GM12878 (cell line): ENCODE measurements at regions of chr5 and their contacts with region 1.

Region 1: DNA sequence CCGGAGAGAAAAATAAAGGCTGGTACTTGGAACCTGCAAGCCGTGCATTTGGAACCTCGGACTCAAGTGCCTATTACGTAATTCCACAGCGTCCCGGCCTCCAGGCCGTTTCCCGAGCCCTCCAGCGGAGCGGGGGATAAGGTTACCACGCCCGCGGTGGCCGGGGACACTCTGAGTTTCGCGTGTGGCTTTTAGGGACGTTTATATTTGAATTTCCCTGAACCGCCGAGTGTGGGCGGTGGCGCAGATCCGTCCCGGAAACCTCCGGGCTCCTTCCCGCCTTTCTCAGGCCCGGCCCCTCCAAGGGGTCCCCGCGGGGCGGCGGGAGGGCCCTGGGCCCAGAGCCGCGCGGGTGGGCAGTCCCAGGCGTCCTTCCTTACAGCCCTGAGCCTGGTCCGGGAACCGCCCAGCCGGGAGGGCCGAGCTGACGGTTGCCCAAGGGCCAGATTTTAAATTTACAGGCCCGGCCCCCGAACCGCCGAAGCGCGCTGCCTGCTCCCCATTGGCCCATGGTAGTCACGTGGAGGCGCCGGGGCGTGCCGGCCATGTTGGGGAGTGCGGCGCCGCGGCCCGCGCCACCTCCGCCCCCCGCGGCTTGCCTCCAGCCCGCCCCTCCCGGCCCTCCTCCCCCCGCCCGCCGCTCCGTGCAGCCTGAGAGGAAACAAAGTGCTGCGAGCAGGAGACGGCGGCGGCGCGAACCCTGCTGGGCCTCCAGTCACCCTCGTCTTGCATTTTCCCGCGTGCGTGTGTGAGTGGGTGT is at the start of gene LMNB1:
- DNase-seq: peak; percentile 83
- ATAC-seq: peak; percentile 80
- H3K4me3 ChIP-seq: peak within 1 kb of the TSS; percentile 96
- H3K27ac ChIP-seq: peak within 1 kb of the TSS; percentile 96
- H3K4me1 ChIP-seq: no peaks in the 10 kb centered on the region
- H3K27me3 ChIP-seq: no peaks in the 10 kb centered on the region
- CTCF ChIP-seq: no peak
- EP300 ChIP-seq: 0 out of 4 replicates have a peak, but pooled peaks have one; percentile 16 to 55
- POLR2A ChIP-seq: peak; percentile 70
- RAD21 ChIP-seq: 0 out of 2 replicates have a peak, but pooled peaks have one; percentile 18
- polyA plus RNA-seq, gene LMNB1: 7.0 to 7.1 TPM

Region 2: DNA sequence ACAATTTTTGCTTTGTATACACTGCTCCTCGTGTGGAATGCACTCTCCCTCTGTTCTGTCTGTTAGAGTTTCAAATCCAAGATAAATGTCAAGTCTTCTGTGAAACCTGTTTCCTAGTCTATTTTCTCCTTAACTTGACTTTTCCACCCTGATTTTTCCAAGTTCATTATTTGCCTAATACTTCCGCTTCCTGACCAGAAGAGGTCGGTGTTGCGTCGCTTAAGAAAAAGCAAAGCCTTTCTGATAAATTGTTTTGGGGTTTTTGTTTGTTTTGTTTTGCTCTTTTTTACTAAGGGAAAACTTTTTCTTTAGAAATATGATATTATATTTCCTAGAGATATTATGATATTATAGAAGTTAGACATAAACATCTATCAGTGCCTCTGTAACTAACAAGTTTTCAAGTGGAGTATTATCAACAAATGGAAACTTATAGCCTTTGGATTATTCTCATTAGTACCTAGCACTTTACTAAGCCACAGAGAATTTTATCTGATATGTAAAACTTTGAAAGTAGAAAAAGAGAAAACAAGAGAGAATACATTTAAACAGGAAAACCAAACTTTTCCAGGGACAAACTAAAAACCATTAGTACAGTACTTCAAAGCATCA is 120.2 kb before region 1 on chr5:
- CTCF ChIA-PET with region 1: interaction called, 46 read pairs
- POLR2A ChIA-PET with region 1: interaction called, 5 read pairs
- RAD21 ChIA-PET with region 1: interaction called, 14 read pairs
- SMC1A ChIA-PET with region 1: interaction called, 37 read pairs
- in situ Hi-C with region 1: no loop called
- intact Hi-C with region 1: no loop called
- DNase-seq: no peak
- ATAC-seq: peak; percentile 22; the same call in 1 of the 3 replicates
- H3K4me3 ChIP-seq: no peak overlapping the region
- H3K27ac ChIP-seq: no peak overlapping the region
- H3K4me1 ChIP-seq: no peaks in the 10 kb centered on the region
- H3K27me3 ChIP-seq: no peaks in the 10 kb centered on the region
- CTCF ChIP-seq: peak; percentile 75 to 88 (median 86)
- EP300 ChIP-seq: no peak
- POLR2A ChIP-seq: no peak
- RAD21 ChIP-seq: peak; percentile 98

Region 3: DNA sequence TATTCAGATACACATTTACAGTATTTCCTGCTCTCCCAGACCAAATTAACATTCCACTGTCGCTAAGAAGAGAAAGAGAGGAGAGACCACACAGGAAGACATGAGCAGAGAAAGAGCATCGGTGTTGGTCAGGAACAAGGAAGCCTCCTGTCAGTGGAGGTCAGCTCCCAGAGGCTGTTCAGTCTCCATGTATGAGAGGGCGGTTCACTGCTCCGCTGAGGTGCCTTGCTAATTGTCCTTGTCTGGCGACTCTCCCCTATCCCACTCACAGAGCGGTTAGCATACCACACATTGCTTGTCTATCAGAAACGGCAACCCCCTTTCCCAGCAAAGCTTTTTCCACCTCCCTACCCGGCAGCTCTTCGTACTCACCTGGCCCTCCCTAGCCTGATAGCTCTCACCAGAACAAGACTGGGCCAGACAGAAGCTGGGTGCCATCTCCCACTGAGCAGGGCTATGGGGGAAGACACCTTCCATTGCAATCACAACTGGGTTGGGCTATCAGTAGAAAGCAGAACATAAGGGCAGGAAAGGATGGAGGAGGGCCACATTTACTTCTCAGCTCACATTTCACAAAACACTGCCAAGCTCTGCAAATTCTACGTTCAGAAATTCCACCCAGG is 58.3 kb before region 1 on chr5:
- CTCF ChIA-PET with region 1: interaction called, 4 read pairs
- POLR2A ChIA-PET with region 1: no interaction called
- RAD21 ChIA-PET with region 1: interaction called, 5 read pairs
- SMC1A ChIA-PET with region 1: interaction called, 13 read pairs
- in situ Hi-C with region 1: no loop called
- intact Hi-C with region 1: loop called (anchors 2 kb)
- DNase-seq: no peak
- ATAC-seq: no peak; the same call in 2 of the 3 replicates
- H3K4me3 ChIP-seq: no peak overlapping the region
- H3K27ac ChIP-seq: no peak overlapping the region
- H3K4me1 ChIP-seq: no peaks in the 10 kb centered on the region
- H3K27me3 ChIP-seq: no peaks in the 10 kb centered on the region
- CTCF ChIP-seq: no peak
- EP300 ChIP-seq: no peak
- POLR2A ChIP-seq: no peak
- RAD21 ChIP-seq: no peak

Region 4: DNA sequence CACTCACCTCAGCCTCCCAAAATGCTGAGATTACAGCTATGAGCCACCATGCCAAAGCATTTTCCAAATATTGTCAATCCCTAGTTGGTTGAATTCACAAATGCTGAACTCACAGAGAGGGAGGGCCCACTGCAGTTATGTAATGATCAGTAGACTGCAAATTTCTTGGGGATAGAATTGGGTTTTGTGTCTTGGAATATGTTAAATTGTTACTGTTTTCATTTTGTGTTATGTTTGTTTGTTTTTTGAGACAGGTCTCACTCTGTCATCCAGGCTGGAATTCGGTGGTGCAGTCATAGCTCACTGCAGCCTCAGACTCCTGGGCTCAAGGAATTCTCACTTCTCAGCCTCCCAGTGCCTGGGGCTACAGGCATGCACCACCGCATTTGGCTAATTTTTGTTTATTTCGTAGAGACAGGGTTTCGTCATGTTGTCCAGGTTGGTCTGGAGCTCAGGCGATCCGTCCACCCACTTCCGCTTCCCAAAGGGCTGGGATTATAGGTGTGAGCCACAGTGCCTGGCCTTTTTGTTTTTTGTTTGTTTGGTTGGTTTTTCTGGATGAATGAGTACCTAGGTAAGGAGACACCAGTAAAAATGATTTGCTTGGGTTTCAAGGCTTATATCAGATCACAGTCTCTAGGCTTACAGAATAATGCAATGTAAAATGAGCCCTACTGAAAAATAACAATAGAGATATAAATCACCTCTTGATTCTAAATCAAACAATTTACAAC is 31.3 kb before region 1 on chr5:
- CTCF ChIA-PET with region 1: interaction called, 9 read pairs
- POLR2A ChIA-PET with region 1: interaction called, 9 read pairs
- RAD21 ChIA-PET with region 1: interaction called, 13 read pairs
- SMC1A ChIA-PET with region 1: interaction called, 17 read pairs
- in situ Hi-C with region 1: no loop called
- intact Hi-C with region 1: loop called (anchors 1 kb)
- DNase-seq: no peak
- ATAC-seq: no peak
- H3K4me3 ChIP-seq: no peak overlapping the region
- H3K27ac ChIP-seq: no peak overlapping the region
- H3K4me1 ChIP-seq: peaks cover 16% of the 10 kb centered on the region
- H3K27me3 ChIP-seq: no peaks in the 10 kb centered on the region
- CTCF ChIP-seq: no peak
- EP300 ChIP-seq: no peak
- POLR2A ChIP-seq: no peak
- RAD21 ChIP-seq: no peak

Region 5: DNA sequence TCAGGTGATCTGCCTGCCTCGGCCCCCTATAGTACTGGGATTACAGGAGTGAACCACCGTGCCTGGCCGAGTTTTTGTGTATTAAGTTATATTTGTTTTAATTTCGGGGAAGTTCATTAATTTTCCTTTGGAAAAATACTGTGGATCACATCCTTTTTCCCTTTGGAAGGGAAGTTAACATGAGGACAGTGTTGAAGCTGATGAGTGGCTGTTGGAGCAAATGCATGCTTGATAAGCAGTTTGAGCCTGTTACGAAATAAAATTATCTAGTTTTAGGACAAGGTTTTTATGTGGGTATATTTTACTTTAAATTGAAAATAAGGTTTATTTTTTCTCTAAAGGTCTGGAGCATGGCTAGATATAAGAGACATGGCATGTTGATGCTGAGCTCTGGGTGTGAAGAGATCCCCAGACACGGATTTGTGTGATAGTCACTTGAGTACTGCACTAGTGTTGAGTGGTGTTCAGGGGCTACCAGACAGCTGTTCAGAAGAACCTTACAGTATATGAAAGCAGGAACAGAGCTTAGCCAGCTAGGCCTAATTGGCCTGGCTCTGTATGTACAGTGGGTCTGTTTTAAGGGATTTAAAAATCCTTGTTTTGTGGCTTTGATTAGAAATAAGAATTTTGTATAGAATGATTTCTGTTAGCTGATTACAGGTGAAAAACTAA is 17.6 kb after region 1 on chr5:
- CTCF ChIA-PET with region 1: interaction called, 75 read pairs
- POLR2A ChIA-PET with region 1: interaction called, 31 read pairs
- RAD21 ChIA-PET with region 1: interaction called, 55 read pairs
- SMC1A ChIA-PET with region 1: interaction called, 58 read pairs
- in situ Hi-C with region 1: no loop called
- intact Hi-C with region 1: no loop called
- DNase-seq: no peak
- ATAC-seq: peak; percentile 47
- H3K4me3 ChIP-seq: no peak overlapping the region
- H3K27ac ChIP-seq: peak overlapping the region; percentile 2; the same call in 1 of the 2 replicates
- H3K4me1 ChIP-seq: peaks cover 23% of the 10 kb centered on the region
- H3K27me3 ChIP-seq: no peaks in the 10 kb centered on the region
- CTCF ChIP-seq: no peak
- EP300 ChIP-seq: no peak
- POLR2A ChIP-seq: no peak
- RAD21 ChIP-seq: no peak

Region 6: GRCh38 chr5:127011961-127012644 is 235.4 kb after region 1 on chr5:
- CTCF ChIA-PET with region 1: no interaction called
- POLR2A ChIA-PET with region 1: interaction called, 8 read pairs
- RAD21 ChIA-PET with region 1: interaction called, 3 read pairs
- SMC1A ChIA-PET with region 1: interaction called, 3 read pairs
- in situ Hi-C with region 1: no loop called
- intact Hi-C with region 1: loop called (anchors 5 kb)
- DNase-seq: peak; percentile 66
- ATAC-seq: peak; percentile 85
- H3K4me3 ChIP-seq: no peak overlapping the region
- H3K27ac ChIP-seq: peak overlapping the region; percentile 65
- H3K4me1 ChIP-seq: peaks cover 25% of the 10 kb centered on the region
- H3K27me3 ChIP-seq: no peaks in the 10 kb centered on the region
- CTCF ChIP-seq: no peak
- EP300 ChIP-seq: peak; percentile 73 to 87; a peak in 2 of 4 replicates
- POLR2A ChIP-seq: 0 out of 2 replicates have a peak, but pooled peaks have one; percentile 20
- RAD21 ChIP-seq: no peak